B cell (primary cell): ENCODE measurements at regions of chr15 and their contacts with region 1.

Region 1: DNA sequence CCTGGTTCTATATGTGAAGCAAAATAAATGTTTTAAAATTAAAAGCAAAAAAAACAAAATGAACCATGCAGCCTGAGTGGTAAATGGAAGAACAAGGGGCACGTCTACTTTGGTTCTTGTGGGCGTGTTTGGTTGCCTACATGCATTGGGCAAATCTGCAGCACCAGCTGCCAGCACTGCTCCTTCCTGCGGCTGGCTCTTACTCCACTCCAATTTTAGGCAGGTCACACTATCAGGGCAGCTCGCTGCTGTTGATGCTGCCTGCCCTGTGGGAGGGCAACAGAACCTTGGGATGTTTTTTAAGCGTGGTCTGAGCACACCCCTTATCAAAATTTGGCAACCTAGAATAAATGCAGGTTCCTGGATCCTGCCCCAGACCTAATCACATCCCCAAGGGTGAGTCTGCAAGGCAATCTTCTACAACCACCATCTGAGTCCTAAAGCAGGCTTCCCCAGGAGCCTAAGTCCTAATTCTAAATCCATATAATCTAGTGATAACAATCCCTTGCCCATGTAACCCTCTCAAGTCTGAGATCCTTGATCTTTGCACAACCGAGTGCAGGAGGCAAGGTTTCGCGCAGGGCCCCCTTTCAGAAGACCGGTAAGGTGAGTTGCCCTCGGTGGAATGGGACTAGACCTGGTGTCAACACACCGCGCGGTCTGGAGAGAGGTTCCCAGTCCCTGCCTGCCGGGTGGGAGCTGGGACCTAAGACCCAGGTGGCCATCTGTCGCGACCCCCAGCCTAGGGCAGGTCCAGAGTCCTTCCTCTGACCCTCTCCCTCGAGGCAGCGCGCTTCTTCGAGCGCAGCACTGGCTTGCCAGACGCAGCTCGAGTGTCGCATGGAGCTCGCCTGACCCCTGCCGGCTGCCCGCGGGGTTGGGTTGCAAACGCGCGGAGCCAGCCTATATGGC is 15.9 kb downstream of the IVD start:
- DNase-seq: peak; percentile 83
- ATAC-seq: peak; percentile 96
- H3K4me3 ChIP-seq: no peak overlapping the region
- H3K4me3 Mint-ChIP-seq: no peak overlapping the region
- H3K27ac ChIP-seq: no peak overlapping the region
- H3K27ac Mint-ChIP-seq: no peak overlapping the region
- H3K4me1 ChIP-seq: peaks cover 4 to 7% of the 10 kb centered on the region in 2 donors
- H3K4me1 Mint-ChIP-seq: peaks cover 2% of the 10 kb centered on the region
- H3K27me3 ChIP-seq: no peaks in the 10 kb centered on the region
- H3K27me3 Mint-ChIP-seq: no peaks in the 10 kb centered on the region
- CTCF ChIP-seq: peak; percentile 97

Region 2: DNA sequence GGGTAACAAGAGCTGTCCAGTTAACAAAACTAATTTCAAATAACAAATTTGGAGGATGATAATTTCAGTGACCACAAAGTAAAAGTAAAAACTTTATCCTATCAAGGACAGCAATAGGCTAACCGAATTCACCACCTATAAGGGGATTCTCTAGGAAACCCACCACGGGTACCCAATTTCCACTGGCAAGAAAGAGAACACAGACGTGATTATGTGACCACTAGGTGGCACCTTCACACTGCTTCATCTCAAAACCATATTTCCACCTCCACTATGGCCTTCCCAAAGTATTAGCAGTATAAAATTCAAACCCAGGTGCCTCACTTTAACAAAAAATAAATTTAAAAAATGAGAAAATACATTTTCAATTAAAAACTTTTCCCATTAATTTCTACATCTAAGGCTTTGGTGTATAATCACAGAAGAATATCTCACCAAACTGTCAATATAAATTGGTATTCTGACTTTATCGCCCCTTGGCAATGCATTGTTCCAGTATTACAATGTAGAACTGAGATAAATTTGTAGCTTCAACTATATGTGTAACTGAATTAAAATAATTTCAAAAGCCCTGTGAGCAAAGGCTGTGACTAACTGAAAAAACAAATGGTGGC is 735.4 kb before region 1 on chr15:
- CTCF ChIA-PET with region 1: no interaction called
- POLR2A ChIA-PET with region 1: no interaction called
- intact Hi-C with region 1: loop called (anchors 5 kb)
- DNase-seq: peak; percentile 56
- ATAC-seq: peak; percentile 33
- H3K4me3 ChIP-seq: no peak overlapping the region
- H3K4me3 Mint-ChIP-seq: no peak overlapping the region
- H3K27ac ChIP-seq: no peak overlapping the region
- H3K27ac Mint-ChIP-seq: no peak overlapping the region
- H3K4me1 ChIP-seq: no peaks in the 10 kb centered on the region
- H3K4me1 Mint-ChIP-seq: no peaks in the 10 kb centered on the region
- H3K27me3 ChIP-seq: no peaks in the 10 kb centered on the region
- H3K27me3 Mint-ChIP-seq: peaks cover 4% of the 10 kb centered on the region
- CTCF ChIP-seq: peak; percentile 92

Region 3: DNA sequence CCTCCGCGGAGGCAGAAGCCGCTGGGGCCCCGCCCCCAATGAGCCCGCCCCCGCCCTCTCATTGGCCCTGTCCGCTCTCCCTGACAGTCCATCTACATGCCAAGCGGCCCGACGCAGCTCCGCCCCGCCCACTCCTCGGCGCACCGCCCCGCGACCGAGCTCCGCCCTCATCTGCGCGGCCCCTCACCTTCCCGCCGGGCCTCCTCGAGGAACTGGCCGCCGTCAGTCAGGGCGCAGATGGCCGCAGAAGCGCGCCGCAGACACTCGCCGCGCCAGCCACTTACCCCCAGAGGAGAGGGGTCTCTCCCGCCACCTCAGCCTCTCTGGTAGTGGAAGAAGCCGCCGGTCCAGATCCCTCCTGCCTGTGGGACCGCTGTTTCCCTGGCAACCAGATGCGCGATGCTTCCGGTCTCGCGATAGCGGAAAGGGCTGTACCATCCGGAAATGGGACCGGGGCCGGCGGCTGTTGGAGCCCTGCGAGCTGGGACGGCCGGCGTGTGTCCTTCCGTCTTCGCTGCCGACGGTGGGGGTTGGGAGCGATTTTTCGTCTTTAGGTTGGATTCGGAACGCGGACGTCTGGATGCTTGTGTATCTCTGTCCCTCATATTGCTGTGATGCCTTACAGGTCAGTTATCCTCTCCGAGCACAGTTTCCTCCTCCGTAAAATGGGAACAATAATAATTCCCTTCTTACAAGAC is 638.9 kb before region 1 on chr15 and contains the start of gene FSIP1:
- CTCF ChIA-PET with region 1: interaction called, 3 read pairs
- POLR2A ChIA-PET with region 1: no interaction called
- intact Hi-C with region 1: loop called (anchors 10 kb)
- DNase-seq: peak; percentile 98
- ATAC-seq: peak; percentile 99
- H3K4me3 ChIP-seq: peak within 1 kb of the TSS; percentile 81 to 98 (median 91)
- H3K4me3 Mint-ChIP-seq: peak within 1 kb of the TSS; percentile 85
- H3K27ac ChIP-seq: peak within 1 kb of the TSS; percentile 63 to 83
- H3K27ac Mint-ChIP-seq: peak within 1 kb of the TSS; percentile 97
- H3K4me1 ChIP-seq: peaks cover 17 to 18% of the 10 kb centered on the region in 2 donors
- H3K4me1 Mint-ChIP-seq: peaks cover 43% of the 10 kb centered on the region
- H3K27me3 ChIP-seq: peaks cover 0 to 5% (median under 1%) of the 10 kb centered on the region in 4 experiments
- H3K27me3 Mint-ChIP-seq: peaks cover 5% of the 10 kb centered on the region
- CTCF ChIP-seq: no peak
- total RNA-seq, gene FSIP1: 0.44 and 0.49 TPM in 2 replicates

Region 4: DNA sequence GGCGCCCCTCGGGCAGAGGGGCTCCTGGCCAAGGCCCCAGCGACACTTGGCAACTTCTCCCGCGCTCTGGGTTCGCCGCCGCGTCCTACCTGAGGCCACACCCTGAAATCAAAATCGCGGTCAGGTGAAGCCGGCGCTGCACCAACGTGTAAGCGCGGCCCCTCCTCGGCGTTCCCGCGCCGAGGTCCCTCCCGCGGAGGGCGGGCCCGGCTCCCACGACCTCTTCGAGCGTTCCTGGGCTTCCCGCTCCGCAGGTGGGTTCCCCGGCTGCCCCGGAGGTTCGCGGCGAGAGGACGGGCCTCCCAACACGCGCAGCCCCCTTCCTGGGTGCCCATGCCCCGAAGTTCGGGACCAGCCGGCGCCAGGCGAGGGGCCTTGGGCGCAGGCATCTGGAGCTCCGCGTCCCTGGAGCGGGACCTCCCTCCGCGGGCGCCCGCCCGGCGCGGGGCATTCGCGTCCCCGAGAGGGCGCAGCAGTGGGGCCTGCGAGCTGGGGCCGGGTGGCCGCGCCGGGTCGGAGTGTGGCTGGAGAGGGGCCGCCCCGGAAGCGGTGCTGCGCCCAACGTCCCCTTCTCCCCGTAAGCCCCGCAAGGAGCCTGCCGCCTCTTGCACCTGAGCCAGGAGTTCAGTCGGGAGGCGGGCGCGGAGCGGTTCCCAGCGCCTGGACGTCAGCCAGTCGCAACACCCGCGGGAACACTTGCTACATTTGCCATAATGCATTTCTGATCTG is 168.9 kb before region 1 on chr15:
- CTCF ChIA-PET with region 1: no interaction called
- POLR2A ChIA-PET with region 1: no interaction called
- intact Hi-C with region 1: no loop called
- DNase-seq: peak; percentile 50
- ATAC-seq: peak; percentile 71
- H3K4me3 ChIP-seq: peak overlapping the region in 4 of 5 experiments; percentile 37 to 64 (median 54)
- H3K4me3 Mint-ChIP-seq: peak overlapping the region; percentile 89
- H3K27ac ChIP-seq: no peak overlapping the region
- H3K27ac Mint-ChIP-seq: no peak overlapping the region
- H3K4me1 ChIP-seq: peaks cover 10 to 17% of the 10 kb centered on the region in 2 donors
- H3K4me1 Mint-ChIP-seq: peaks cover 10% of the 10 kb centered on the region
- H3K27me3 ChIP-seq: peaks cover 0 to 35% (median 12%) of the 10 kb centered on the region in 4 experiments
- H3K27me3 Mint-ChIP-seq: peaks cover 27% of the 10 kb centered on the region
- CTCF ChIP-seq: no peak

Region 5: DNA sequence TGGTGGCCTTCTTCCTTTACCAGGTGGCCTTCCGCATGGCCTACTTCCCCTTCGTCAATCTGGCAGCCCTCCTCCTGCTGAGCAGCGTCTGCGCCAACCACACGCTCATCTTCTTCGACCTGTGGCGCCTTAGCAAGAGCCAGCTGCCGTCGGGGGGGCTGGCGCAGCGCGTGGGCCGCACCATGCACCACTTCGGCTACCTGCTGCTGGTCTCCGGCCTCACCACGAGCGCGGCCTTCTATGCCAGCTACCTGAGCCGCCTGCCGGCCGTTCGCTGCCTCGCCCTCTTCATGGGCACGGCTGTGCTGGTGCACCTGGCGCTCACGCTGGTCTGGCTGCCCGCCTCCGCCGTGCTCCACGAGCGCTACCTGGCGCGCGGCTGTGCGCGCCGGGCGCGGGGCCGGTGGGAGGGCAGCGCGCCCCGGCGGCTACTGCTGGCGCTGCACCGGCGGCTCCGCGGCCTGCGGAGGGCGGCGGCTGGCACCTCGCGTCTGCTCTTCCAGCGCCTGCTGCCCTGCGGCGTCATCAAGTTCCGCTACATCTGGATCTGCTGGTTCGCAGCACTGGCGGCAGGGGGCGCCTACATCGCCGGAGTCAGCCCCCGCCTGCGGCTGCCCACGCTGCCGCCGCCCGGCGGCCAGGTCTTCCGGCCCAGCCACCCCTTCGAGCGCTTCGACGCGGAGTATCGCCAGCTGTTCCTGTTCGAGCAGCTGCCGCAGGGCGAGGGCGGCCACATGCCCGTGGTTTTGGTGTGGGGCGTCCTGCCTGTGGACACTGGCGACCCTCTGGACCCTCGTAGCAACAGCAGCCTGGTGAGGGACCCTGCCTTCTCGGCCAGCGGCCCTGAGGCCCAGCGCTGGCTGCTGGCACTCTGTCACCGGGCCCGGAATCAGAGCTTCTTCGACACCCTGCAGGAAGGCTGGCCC is 53.6 kb before region 1 on chr15:
- CTCF ChIA-PET with region 1: interaction called, 56 read pairs
- POLR2A ChIA-PET with region 1: no interaction called
- intact Hi-C with region 1: loop called (anchors 1 kb)
- DNase-seq: peak; percentile 94
- ATAC-seq: peak; percentile 92
- H3K4me3 ChIP-seq: peak overlapping the region; percentile 21 to 62 (median 57)
- H3K4me3 Mint-ChIP-seq: peak overlapping the region; percentile 86
- H3K27ac ChIP-seq: peak overlapping the region; percentile 26 to 43
- H3K27ac Mint-ChIP-seq: peak overlapping the region; percentile 83
- H3K4me1 ChIP-seq: peaks cover 14 to 26% of the 10 kb centered on the region in 2 donors
- H3K4me1 Mint-ChIP-seq: peaks cover 22% of the 10 kb centered on the region
- H3K27me3 ChIP-seq: no peaks in the 10 kb centered on the region
- H3K27me3 Mint-ChIP-seq: no peaks in the 10 kb centered on the region
- CTCF ChIP-seq: peak; percentile 94

Region 6: DNA sequence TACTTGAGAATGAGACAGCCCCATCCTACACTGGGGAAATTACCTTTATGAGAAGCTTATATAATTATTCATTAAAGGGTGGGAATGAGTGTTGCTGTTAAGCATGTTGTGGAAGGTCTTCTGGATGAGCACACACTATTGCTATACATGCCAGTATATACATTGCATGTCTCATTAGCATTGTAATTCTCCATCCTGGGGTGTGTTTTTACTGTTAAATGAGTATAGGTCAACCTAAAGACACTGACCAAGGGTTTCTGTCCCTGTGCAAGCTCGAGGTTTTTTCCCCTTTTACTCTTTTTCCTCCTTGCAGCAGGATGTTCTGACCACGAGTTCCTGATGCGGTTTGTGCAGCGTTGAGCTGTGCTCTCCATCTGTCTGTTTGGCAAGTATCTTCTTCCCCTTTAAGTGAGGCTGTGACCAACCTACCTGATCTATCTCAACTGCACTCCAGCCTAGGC is 23.1 kb before region 1 on chr15:
- CTCF ChIA-PET with region 1: interaction called, 17 read pairs
- POLR2A ChIA-PET with region 1: no interaction called
- intact Hi-C with region 1: no loop called
- DNase-seq: peak; percentile 57
- ATAC-seq: peak; percentile 84
- H3K4me3 ChIP-seq: peak overlapping the region in 2 of 5 experiments; percentile 19 to 30
- H3K4me3 Mint-ChIP-seq: peak overlapping the region; percentile 71
- H3K27ac ChIP-seq: peak overlapping the region; percentile 2 to 27
- H3K27ac Mint-ChIP-seq: peak overlapping the region; percentile 74
- H3K4me1 ChIP-seq: peaks cover 17 to 21% of the 10 kb centered on the region in 2 donors
- H3K4me1 Mint-ChIP-seq: peaks cover 20% of the 10 kb centered on the region
- H3K27me3 ChIP-seq: no peaks in the 10 kb centered on the region
- H3K27me3 Mint-ChIP-seq: no peaks in the 10 kb centered on the region
- CTCF ChIP-seq: no peak